ENCODE measurements at regions of chr6 and their contacts with region 1.

Region 1: GRCh38 chr6:85354761-85355618 is 94.9 kb upstream of the NT5E start:
- DNase-seq: peak; percentile 46
- H3K4me3 ChIP-seq: no peak overlapping the region
- CTCF ChIP-seq: peak; percentile 93

Region 2: DNA sequence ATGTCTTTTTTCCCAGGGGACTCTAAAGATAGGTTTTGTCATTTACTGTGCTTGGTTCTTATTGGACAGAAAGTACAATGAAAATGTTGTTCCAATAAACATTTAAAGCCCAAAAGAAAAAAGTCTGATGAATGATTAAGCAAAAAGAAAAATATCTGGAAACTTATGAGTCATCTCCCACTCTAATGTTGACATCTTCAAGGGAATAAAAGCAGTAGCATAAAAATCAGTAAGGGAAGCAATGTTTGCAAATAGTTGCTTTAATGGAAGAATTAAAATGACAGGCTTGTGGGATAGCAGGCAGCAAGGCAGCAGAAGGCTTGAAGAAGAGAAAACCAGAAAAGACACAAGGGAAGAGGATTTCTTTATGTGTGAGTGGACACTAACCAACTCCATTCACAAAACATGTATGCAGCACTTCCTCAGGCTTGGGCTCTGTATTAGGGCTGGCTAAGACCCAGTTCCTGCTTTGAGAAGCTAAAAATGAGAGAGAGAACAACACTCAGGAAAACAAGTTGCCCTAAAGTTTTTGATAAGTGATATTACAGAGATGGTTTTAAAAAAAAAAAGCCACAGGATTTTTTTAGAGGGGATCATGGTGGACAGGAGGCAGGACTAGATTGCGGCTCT is 168.3 kb before region 1 on chr6:
- in situ Hi-C with region 1: no loop called
- DNase-seq: no peak
- H3K4me3 ChIP-seq: no peak overlapping the region
- CTCF ChIP-seq: no peak

Region 3: DNA sequence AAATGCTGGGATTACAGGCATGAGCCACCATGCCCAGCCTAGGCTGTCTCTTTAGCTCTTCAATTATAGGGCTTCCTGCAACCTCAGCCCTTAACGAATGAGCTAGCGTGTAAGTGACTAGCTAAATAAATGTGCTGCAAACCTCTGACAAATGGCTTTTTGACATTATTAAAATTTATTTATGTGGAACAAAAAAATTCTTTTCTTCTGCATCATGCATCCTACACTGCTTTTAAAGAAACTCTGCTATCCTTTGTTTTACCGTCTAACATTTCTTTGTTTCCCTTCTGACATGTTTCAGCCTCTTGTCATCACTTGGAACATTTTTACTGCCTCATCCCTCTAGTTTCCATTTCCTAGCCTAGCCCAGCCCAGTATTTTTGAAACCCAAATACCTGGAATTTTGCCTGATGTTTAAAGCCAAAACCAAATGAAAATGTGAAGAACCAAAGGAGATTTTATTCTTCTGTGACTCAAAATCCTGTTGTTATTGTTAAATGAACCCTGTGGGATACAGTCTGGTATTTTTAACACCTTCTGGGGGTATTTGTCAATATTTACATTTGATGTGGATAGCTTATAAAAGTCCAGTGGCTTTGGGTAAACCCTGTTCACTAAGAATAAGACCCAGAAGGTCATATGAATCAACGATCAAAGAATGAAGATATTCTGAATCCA is 104.4 kb after region 1 on chr6:
- in situ Hi-C with region 1: loop called (anchors 5 kb)
- DNase-seq: peak; percentile 95
- H3K4me3 ChIP-seq: no peak overlapping the region
- CTCF ChIP-seq: no peak

Region 4: GRCh38 chr6:85678602-85679444 is 323.8 kb after region 1 on chr6:
- in situ Hi-C with region 1: loop called (anchors 5 kb)
- DNase-seq: peak; percentile 98
- H3K4me3 ChIP-seq: peak overlapping the region; percentile 75
- CTCF ChIP-seq: no peak

Measured in astrocyte of the cerebellum (primary cell).